OCI-LY7 (cell line): ENCODE measurements at regions of chr10 and their contacts with region 1.

Region 1: DNA sequence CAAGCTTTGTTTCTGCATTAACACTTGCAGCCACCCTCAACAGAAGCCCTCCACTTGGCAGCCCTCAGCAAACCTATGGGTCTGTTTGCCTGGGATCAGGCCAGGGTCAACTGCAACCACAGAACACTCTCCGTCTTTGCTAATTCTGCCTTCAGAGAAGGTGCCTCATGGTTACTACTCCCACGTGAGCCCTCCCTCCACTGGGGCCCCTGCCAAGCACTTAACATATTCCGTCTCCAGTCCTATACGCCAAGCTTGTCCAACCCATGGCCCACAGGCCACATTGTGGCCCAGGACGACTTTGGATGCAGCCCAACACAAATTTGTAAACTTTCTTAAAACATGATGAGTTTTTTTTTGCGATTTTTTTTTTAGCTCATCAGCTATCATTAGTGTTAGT is 54.7 kb downstream of the HSPA12A start:
- DNase-seq: no peak
- H3K4me3 ChIP-seq: no peak overlapping the region
- H3K27ac ChIP-seq: no peak overlapping the region
- H3K4me1 ChIP-seq: no peaks in the 10 kb centered on the region
- CTCF ChIP-seq: no peak

Region 2: DNA sequence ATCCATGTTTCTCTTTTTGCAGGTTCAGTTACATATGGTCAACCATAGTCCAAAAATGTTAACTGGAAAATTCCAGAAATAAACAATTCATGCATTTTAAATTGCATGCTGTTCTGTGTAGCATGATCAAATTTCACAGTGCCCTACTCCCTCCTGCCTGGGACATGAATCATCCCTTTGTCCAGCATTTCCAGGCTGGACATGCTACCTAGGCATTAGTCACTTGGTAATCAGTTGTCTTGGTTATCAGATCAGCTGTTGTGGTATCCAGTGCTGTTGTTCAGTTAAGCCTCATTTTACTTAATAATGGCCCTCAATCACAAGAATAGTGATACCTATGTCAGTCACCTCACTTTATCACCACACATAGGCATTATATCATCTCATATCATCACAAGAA is 149.2 kb before region 1 on chr10:
- CTCF ChIA-PET with region 1: no interaction called
- POLR2A ChIA-PET with region 1: no interaction called
- intact Hi-C with region 1: no loop called
- DNase-seq: no peak
- H3K4me3 ChIP-seq: no peak overlapping the region
- H3K27ac ChIP-seq: no peak overlapping the region
- H3K4me1 ChIP-seq: no peaks in the 10 kb centered on the region
- CTCF ChIP-seq: no peak

Region 3: GRCh38 chr10:116787893-116788665 is 100.4 kb after region 1 on chr10:
- CTCF ChIA-PET with region 1: no interaction called
- POLR2A ChIA-PET with region 1: no interaction called
- intact Hi-C with region 1: loop called (anchors 1 kb)
- DNase-seq: peak; percentile 79
- H3K4me3 ChIP-seq: no peak overlapping the region
- H3K27ac ChIP-seq: no peak overlapping the region
- H3K4me1 ChIP-seq: peaks cover 4% of the 10 kb centered on the region
- CTCF ChIP-seq: peak; percentile 95

Region 4: DNA sequence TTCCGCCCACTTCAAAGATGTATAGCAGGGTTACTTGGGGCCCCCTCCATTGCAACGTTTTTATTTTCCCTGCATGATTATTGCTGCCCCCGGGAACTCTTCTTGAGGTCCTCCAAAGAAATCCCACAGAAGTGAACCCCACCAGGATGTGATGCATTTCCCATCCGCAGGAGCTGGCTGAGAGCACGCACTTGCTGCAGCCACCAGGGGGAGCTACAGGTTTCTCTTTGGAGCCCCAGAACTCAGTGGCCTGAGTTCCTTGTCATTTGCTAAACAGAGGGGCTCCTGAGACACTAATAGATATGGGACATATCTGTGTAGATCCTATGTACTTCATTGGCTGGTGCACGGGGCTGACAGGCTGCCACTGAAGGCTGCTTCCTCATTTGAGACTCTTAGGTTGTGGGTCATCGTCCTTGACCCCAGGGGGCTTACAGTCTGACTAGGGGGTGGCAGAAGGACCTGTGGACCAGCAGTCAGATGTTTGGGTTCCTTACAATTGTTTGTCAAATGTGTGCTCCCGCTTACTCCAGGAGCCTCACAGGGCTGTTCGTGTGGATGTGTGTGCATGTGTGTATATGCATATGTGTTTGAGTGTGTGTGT is 109.4 kb after region 1 on chr10:
- CTCF ChIA-PET with region 1: no interaction called
- POLR2A ChIA-PET with region 1: no interaction called
- intact Hi-C with region 1: loop called (anchors 1 kb)
- DNase-seq: peak; percentile 72
- H3K4me3 ChIP-seq: no peak overlapping the region
- H3K27ac ChIP-seq: no peak overlapping the region
- H3K4me1 ChIP-seq: no peaks in the 10 kb centered on the region
- CTCF ChIP-seq: peak; percentile 91

Region 5: GRCh38 chr10:116826803-116827202 is 139.2 kb after region 1 on chr10:
- CTCF ChIA-PET with region 1: no interaction called
- POLR2A ChIA-PET with region 1: no interaction called
- intact Hi-C with region 1: no loop called
- DNase-seq: no peak
- H3K4me3 ChIP-seq: no peak overlapping the region
- H3K27ac ChIP-seq: no peak overlapping the region
- H3K4me1 ChIP-seq: no peaks in the 10 kb centered on the region
- CTCF ChIP-seq: no peak

Region 6: GRCh38 chr10:117174439-117175214 is 487.0 kb after region 1 on chr10:
- CTCF ChIA-PET with region 1: no interaction called
- POLR2A ChIA-PET with region 1: no interaction called
- intact Hi-C with region 1: loop called (anchors 1 kb)
- DNase-seq: peak; percentile 83
- H3K4me3 ChIP-seq: peak overlapping the region; percentile 18
- H3K27ac ChIP-seq: no peak overlapping the region
- H3K4me1 ChIP-seq: peaks cover 9% of the 10 kb centered on the region
- CTCF ChIP-seq: peak; percentile 89